ENCODE measurements at regions of chr4 and their contacts with region 1.

Region 1: DNA sequence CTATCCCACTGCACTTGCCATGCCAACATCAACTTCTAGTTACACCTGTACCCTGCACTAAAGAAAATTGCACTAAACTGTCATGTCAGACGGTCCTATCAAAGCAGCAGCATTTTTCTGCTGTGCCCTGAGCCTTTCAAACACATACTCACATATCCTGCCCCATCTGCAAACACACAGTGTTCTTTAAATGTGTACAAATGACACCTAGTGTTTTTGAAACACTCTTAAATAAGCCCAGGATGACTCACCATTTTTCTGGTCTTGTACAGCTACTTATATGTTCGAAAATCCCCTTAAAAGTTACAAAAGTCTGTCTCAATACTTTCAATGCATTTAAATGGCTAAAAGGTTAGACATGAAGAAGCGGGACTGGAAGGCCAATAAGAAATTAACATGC is 346.7 kb upstream of the PPARGC1A start:
- DNase-seq: no peak
- ATAC-seq: no peak
- H3K4me3 ChIP-seq: no peak overlapping the region
- H3K27ac ChIP-seq: no peak overlapping the region
- H3K4me1 ChIP-seq: peaks cover 0 to 35% (median 3%) of the 10 kb centered on the region in 9 donors
- H3K27me3 ChIP-seq: no peaks in the 10 kb centered on the region
- CTCF ChIP-seq: no peak

Region 2: DNA sequence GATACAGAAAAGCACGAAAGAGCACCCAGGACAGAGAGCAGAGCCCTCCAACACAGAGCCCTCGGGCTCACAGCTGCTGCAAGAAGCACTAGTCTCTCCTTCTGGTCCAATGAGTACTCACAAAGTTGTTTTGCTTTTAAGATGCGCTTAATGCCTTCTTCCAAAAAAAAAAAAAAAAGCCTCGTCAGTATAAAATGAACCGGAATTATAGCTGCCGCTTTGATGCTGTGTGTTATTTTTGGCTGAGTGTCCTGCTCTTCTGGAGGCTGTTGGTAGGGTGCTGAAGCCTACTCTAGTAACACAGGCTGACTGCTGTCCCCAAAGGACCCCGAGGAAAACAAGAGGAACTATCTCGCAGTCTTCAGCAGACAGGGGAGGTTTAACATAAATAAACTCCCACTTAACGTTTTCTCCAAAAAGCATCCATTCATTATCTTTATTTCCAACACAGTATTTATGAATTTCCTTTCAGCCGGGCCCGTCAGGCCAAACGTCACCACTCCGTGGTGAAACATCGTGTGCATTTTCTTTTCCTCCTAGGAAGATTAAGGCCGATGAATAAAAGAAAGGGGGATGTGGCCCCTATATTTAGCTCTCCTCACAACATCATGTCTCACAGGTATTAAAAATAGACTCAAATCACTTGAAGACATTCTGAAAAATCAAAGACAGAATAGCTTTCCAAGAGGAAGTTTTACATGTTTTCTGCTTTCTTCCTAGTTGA is 132.9 kb before region 1 on chr4:
- intact Hi-C with region 1: loop called in 1 of 10 experiments (anchors 5 kb)
- DNase-seq: no peak
- ATAC-seq: peak; percentile 69 to 83 (median 77)
- H3K4me3 ChIP-seq: peak overlapping the region in 6 of 10 donors; percentile 11 to 32 (median 16)
- H3K27ac ChIP-seq: peak overlapping the region in 7 of 10 donors; percentile 32 to 65 (median 49)
- H3K4me1 ChIP-seq: peaks cover 0 to 22% (median 16%) of the 10 kb centered on the region in 9 donors
- H3K27me3 ChIP-seq: no peaks in the 10 kb centered on the region
- CTCF ChIP-seq: no peak